GM12878 (cell line): ENCODE measurements at regions of chr18 and their contacts with region 1.

Region 1: GRCh38 chr18:31230495-31230894 is 67.8 kb upstream of the DSC1 start:
- DNase-seq: peak; percentile 52
- ATAC-seq: peak; percentile 91
- H3K4me3 ChIP-seq: no peak overlapping the region
- H3K27ac ChIP-seq: peak overlapping the region; percentile 72
- H3K4me1 ChIP-seq: peaks cover 24% of the 10 kb centered on the region
- H3K27me3 ChIP-seq: no peaks in the 10 kb centered on the region
- CTCF ChIP-seq: no peak
- EP300 ChIP-seq: peak; percentile 35 to 77; a peak in 2 of 4 replicates
- POLR2A ChIP-seq: no peak
- RAD21 ChIP-seq: peak; percentile 10; the same call in 1 of the 2 replicates

Region 2: GRCh38 chr18:31267823-31268481 is 37.5 kb after region 1 on chr18:
- CTCF ChIA-PET with region 1: interaction called, 3 read pairs
- POLR2A ChIA-PET with region 1: no interaction called
- RAD21 ChIA-PET with region 1: no interaction called
- SMC1A ChIA-PET with region 1: interaction called, 3 read pairs
- in situ Hi-C with region 1: no loop called
- intact Hi-C with region 1: loop called (anchors 5 kb)
- DNase-seq: peak; percentile 44
- ATAC-seq: peak; percentile 89
- H3K4me3 ChIP-seq: no peak overlapping the region
- H3K27ac ChIP-seq: peak overlapping the region; percentile 60
- H3K4me1 ChIP-seq: peaks cover 6% of the 10 kb centered on the region
- H3K27me3 ChIP-seq: no peaks in the 10 kb centered on the region
- CTCF ChIP-seq: no peak
- EP300 ChIP-seq: peak; percentile 54 to 64; a peak in 2 of 4 replicates
- POLR2A ChIP-seq: no peak
- RAD21 ChIP-seq: no peak

Region 3: DNA sequence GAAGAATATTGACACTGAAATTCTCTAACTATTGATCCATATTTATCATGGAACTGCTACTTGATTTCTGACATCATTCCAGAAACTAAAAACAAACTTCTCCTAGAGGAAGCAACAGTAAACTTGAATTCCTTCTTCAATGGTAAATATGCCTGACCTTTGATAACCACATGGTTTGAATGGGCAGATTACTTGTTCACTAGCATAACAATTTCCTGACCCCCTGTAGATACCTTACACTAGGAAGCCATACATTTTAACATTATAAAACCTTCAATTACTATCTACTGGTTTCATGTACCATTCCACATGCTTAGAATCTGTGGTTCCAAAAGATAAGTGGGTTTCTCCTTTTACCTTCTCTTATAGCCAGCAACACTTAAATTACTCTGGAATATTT is 50.9 kb after region 1 on chr18:
- CTCF ChIA-PET with region 1: no interaction called
- POLR2A ChIA-PET with region 1: no interaction called
- RAD21 ChIA-PET with region 1: no interaction called
- SMC1A ChIA-PET with region 1: no interaction called
- in situ Hi-C with region 1: no loop called
- intact Hi-C with region 1: no loop called
- DNase-seq: no peak
- ATAC-seq: no peak
- H3K4me3 ChIP-seq: no peak overlapping the region
- H3K27ac ChIP-seq: no peak overlapping the region
- H3K4me1 ChIP-seq: no peaks in the 10 kb centered on the region
- H3K27me3 ChIP-seq: no peaks in the 10 kb centered on the region
- CTCF ChIP-seq: no peak
- EP300 ChIP-seq: no peak
- POLR2A ChIP-seq: no peak
- RAD21 ChIP-seq: no peak

Region 4: DNA sequence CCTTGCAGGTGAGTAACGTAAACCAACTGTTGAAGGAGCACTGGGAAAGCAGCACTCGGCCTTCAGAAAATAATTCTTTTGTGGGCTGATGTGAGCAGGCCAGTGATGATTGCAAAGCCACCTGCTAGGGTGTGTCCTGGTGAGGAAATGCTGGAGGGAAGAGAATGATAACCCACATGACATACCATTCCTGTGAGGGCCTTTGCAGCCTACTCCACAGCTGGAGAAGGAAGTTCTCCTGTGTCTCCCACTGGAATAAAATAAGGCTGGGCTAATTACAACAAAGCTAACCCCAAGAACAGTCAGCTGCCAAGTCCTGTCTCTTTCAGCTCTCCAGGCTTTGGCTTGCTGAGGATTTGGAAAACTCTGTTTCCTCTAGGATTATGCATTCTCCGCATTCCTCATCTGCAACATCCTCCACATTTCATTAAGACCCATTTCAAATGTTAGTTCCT is 70.7 kb after region 1 on chr18:
- CTCF ChIA-PET with region 1: no interaction called
- POLR2A ChIA-PET with region 1: no interaction called
- RAD21 ChIA-PET with region 1: no interaction called
- SMC1A ChIA-PET with region 1: no interaction called
- in situ Hi-C with region 1: no loop called
- intact Hi-C with region 1: no loop called
- DNase-seq: no peak
- ATAC-seq: no peak
- H3K4me3 ChIP-seq: no peak overlapping the region
- H3K27ac ChIP-seq: no peak overlapping the region
- H3K4me1 ChIP-seq: no peaks in the 10 kb centered on the region
- H3K27me3 ChIP-seq: no peaks in the 10 kb centered on the region
- CTCF ChIP-seq: no peak
- EP300 ChIP-seq: no peak
- POLR2A ChIP-seq: no peak
- RAD21 ChIP-seq: no peak

Region 5: DNA sequence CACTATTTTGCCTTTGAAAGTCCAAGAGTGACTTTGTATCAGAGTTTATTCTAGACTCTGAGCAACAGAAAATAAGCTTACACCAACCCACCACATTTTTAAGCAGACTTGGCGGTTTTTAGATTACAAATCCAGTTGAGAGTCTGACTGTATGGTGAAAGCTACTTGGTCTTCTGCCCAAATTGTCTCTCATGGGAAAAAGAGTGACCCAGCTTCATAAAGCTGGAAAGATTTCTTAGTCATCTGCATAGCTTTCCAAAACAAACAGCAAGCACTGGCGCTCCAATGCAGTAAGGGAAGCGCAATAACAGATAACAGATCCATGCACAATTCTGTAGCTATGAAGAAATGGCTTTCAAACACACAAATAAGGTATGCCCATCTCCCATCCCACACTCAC is 94.6 kb after region 1 on chr18:
- CTCF ChIA-PET with region 1: no interaction called
- POLR2A ChIA-PET with region 1: no interaction called
- RAD21 ChIA-PET with region 1: no interaction called
- SMC1A ChIA-PET with region 1: no interaction called
- in situ Hi-C with region 1: no loop called
- intact Hi-C with region 1: no loop called
- DNase-seq: no peak
- ATAC-seq: no peak
- H3K4me3 ChIP-seq: no peak overlapping the region
- H3K27ac ChIP-seq: no peak overlapping the region
- H3K4me1 ChIP-seq: no peaks in the 10 kb centered on the region
- H3K27me3 ChIP-seq: no peaks in the 10 kb centered on the region
- CTCF ChIP-seq: no peak
- EP300 ChIP-seq: no peak
- POLR2A ChIP-seq: no peak
- RAD21 ChIP-seq: no peak